ENCODE measurements at regions of chr13 and their contacts with region 1.

Region 1: DNA sequence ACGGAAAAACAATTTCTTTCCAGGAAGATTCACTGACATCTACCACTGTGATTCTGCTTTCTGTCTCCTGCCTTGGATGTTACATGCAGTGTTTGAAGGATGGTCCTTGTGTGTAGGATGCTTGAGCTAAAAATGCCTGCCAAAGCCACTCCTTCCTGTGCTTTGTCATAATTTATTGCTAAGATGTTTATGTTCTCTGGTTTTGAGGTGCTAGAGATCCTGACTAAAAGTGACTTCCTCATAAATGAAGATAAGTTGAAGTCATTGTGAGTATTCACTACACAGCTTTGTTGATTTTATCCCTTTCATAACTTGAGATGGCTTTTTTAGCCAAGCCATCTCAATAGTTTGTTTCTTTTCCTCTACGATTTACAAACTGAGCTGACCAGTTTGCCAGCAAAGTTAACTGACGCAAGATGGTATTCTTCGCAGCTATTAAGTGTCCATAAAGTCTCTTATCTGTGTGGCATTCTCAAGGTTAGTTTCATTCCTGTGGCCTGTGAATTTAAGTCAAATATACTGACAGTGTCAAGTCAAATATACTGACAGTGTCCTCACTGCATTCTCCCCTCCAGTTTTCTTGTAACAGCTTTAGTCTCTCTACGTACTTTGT is 15.7 kb upstream of the FBXL3 start:
- DNase-seq: no peak
- H3K4me3 Mint-ChIP-seq: no peak overlapping the region
- H3K27ac Mint-ChIP-seq: peak overlapping the region; percentile 10
- H3K4me1 Mint-ChIP-seq: peaks cover 15% of the 10 kb centered on the region
- H3K27me3 Mint-ChIP-seq: no peaks in the 10 kb centered on the region

Region 2: DNA sequence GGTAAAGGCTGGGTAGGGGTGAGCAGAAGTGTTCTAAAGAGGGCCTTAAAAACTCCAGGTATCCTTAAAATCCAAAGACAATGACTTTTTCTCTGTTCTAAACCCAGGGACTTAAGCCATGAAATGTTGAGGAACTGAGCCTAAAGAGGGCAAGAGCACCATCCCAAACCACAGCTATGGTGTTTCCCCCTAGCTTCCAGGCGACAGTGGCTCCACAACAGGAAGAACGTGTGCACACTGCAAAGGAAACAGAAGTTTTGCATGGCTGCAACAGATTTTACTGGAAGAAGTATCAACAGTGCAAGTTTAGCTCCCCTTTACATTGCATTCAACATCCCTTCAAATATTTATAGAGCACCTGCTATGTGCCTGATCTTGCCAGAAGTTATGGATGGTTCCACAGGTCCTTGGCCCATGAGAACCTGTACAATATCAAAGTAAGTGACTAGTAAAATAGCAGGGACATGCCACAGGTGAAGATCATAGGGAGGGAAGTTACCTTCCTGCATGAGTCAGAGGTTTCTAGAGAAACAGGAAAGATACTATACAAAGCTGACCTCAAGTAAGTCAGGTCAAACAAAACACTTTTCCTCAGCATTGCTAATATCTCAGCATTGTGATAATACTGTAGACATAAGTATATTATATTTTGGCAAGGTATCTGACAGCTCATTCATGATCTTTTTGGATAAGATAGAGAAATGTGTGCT is 148.1 kb before region 1 on chr13:
- intact Hi-C with region 1: no loop called
- DNase-seq: no peak
- H3K4me3 Mint-ChIP-seq: no peak overlapping the region
- H3K27ac Mint-ChIP-seq: no peak overlapping the region
- H3K4me1 Mint-ChIP-seq: peaks cover 19% of the 10 kb centered on the region
- H3K27me3 Mint-ChIP-seq: peaks cover 30% of the 10 kb centered on the region

Region 3: DNA sequence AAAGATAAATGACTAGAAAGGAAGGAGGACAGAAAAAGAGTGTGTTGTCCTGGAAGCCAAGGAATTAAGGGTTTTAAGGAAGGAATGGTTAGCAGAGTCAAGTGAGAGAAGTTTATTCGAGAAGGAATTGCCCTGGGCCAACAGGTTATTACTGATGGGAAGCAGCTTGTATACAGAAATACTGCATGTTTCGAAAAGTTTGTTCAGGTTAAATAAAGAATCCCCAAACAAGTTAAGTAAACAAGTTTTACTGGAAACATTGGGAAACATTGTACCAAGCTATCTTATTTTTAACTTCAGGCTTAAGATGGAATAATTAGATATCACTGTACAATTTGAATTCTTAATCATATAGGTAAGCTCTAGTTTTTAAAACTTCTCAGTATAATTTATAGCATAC is 12.5 kb after region 1 on chr13:
- intact Hi-C with region 1: loop called (anchors 1 kb)
- DNase-seq: no peak
- H3K4me3 Mint-ChIP-seq: no peak overlapping the region
- H3K27ac Mint-ChIP-seq: no peak overlapping the region
- H3K4me1 Mint-ChIP-seq: no peaks in the 10 kb centered on the region
- H3K27me3 Mint-ChIP-seq: no peaks in the 10 kb centered on the region

Measured in activated T-helper 2 cell treated with anti-CD3 and anti-CD28 coated beads, Interferon-gamma antibody, Interleukin-2, Interleukin-4, amounts not matched to agents 10 μg/mL and 5 μg/mL and 100 μg/mL, durations not matched to agents 14 hours and 24 hours and 36 hours (primary cell).